Astrocyte of the cerebellum (primary cell): ENCODE measurements at regions of chr9 and their contacts with region 1.

Region 1: GRCh38 chr9:35829084-35829763 is at the start of gene TMEM8B:
- DNase-seq: peak; percentile 70
- H3K4me3 ChIP-seq: peak within 1 kb of the TSS; percentile 63
- CTCF ChIP-seq: no peak

Region 2: DNA sequence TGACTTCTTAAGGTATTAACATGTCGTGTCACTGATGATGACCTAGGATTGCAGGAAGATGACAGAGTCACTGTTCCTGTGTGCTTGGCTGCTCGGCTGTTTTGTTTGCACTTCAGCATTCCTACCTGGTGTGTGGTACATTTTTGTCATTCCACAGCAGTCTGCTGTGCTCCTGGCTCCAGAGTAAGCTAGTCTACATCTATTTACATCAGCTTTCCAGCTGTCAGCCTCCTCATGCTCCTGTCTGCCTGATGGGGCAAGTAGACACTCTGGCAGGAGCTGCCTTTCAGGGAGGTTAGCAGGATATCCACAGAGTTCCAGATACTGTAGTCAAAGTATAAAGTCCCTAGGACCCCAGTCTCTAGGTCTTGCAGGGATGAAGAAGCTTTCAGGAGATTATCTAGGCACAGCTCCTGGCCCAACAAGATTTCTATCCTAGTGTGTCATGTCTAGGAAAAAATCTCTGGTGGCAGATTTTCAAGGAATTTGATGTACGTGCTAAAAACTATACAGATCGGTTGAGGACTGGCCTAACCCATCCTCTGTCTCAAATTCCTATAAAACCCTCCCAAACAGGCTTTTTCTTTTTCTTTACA is 310.9 kb before region 1 on chr9:
- in situ Hi-C with region 1: no loop called
- DNase-seq: peak; percentile 75
- H3K4me3 ChIP-seq: no peak overlapping the region
- CTCF ChIP-seq: no peak

Region 3: GRCh38 chr9:35869621-35870216 is 40.5 kb after region 1 on chr9:
- in situ Hi-C with region 1: loop called (anchors 5 kb)
- DNase-seq: no peak
- H3K4me3 ChIP-seq: no peak overlapping the region
- CTCF ChIP-seq: no peak

Region 4: GRCh38 chr9:35882996-35883395 is 53.8 kb after region 1 on chr9:
- in situ Hi-C with region 1: no loop called
- DNase-seq: no peak
- H3K4me3 ChIP-seq: no peak overlapping the region
- CTCF ChIP-seq: no peak